ENCODE measurements at regions of chr10 and their contacts with region 1.

Region 1: GRCh38 chr10:52488606-52489485 is 174.8 kb downstream of the DKK1 start:
- DNase-seq: peak; percentile 58
- H3K4me3 ChIP-seq: no peak overlapping the region
- H3K27ac ChIP-seq: no peak overlapping the region
- H3K4me1 ChIP-seq: no peaks in the 10 kb centered on the region
- H3K27me3 ChIP-seq: peaks cover 3% of the 10 kb centered on the region
- CTCF ChIP-seq: peak; percentile 63

Region 2: GRCh38 chr10:52027055-52027705 is 461.7 kb before region 1 on chr10:
- CTCF ChIA-PET with region 1: no interaction called
- POLR2A ChIA-PET with region 1: no interaction called
- intact Hi-C with region 1: no loop called
- DNase-seq: no peak
- H3K4me3 ChIP-seq: no peak overlapping the region
- H3K27ac ChIP-seq: no peak overlapping the region
- H3K4me1 ChIP-seq: no peaks in the 10 kb centered on the region
- H3K27me3 ChIP-seq: no peaks in the 10 kb centered on the region
- CTCF ChIP-seq: no peak

Region 3: GRCh38 chr10:52437205-52437646 is 51.6 kb before region 1 on chr10:
- CTCF ChIA-PET with region 1: no interaction called
- POLR2A ChIA-PET with region 1: no interaction called
- intact Hi-C with region 1: loop called (anchors 10 kb)
- DNase-seq: no peak
- H3K4me3 ChIP-seq: no peak overlapping the region
- H3K27ac ChIP-seq: no peak overlapping the region
- H3K4me1 ChIP-seq: no peaks in the 10 kb centered on the region
- H3K27me3 ChIP-seq: no peaks in the 10 kb centered on the region
- CTCF ChIP-seq: no peak

Region 4: GRCh38 chr10:52566471-52567246 is 77.8 kb after region 1 on chr10:
- CTCF ChIA-PET with region 1: no interaction called
- POLR2A ChIA-PET with region 1: no interaction called
- intact Hi-C with region 1: no loop called
- DNase-seq: peak; percentile 58
- H3K4me3 ChIP-seq: no peak overlapping the region
- H3K27ac ChIP-seq: no peak overlapping the region
- H3K4me1 ChIP-seq: no peaks in the 10 kb centered on the region
- H3K27me3 ChIP-seq: no peaks in the 10 kb centered on the region
- CTCF ChIP-seq: peak; percentile 68